ENCODE measurements at regions of chr2 and their contacts with region 1.

Region 1: DNA sequence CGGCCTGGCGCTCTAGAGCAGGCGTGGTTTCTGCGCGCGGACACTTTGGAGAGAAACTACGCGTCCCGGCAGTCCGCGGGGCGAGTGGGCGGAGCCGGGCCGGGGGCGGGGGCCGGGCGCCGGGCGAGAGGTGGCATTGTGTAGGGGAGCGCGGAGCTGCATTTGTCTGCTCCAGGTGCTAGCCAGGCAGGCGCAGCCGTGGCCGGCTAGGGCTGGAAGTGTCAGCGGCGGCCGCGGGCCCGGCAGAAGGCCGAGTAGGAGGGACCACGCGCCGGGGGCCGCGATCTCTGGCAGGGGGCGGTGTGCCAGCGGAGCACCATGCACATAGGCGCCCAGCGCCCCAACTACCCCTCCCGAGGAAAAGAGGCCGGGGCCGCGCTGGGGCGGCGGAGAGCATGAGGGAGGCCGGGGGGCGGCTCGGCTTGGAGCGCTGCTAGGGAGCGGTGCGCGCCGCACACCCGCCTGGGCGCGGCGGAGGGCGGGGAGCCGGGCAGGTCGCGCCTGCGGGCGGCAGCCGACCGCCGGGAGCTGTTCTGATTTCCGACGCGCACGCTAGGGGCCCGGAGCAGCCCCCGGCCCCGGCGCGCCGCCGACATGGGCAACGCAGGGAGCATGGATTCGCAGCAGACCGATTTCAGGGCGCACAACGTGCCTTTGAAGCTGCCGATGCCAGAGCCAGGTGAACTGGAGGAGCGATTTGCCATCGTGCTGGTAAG is at the start of gene FMNL2:
- DNase-seq: peak; percentile 95
- H3K4me3 ChIP-seq: peak within 1 kb of the TSS; percentile 81 to 99 (median 88)
- H3K27ac ChIP-seq: peak within 1 kb of the TSS; percentile 81 to 83 (median 82)
- H3K4me1 ChIP-seq: peaks cover 6 to 42% (median 35%) of the 10 kb centered on the region in 4 donors
- H3K27me3 ChIP-seq: no peaks in the 10 kb centered on the region
- CTCF ChIP-seq: no peak
- EP300 ChIP-seq: no peak
- POLR2A ChIP-seq: peak; percentile 55
- total RNA-seq, gene FMNL2: 23.5 to 28.0 (median 23.8) TPM

Region 2: GRCh38 chr2:151757861-151758260 is 577.3 kb before region 1 on chr2:
- intact Hi-C with region 1: no loop called
- DNase-seq: no peak
- H3K4me3 ChIP-seq: no peak overlapping the region
- H3K27ac ChIP-seq: no peak overlapping the region
- H3K4me1 ChIP-seq: peaks cover 0 to 6% (median 5%) of the 10 kb centered on the region in 4 donors
- H3K27me3 ChIP-seq: no peaks in the 10 kb centered on the region
- CTCF ChIP-seq: no peak
- EP300 ChIP-seq: no peak
- POLR2A ChIP-seq: no peak

Region 3: GRCh38 chr2:151808258-151809072 is 526.7 kb before region 1 on chr2:
- intact Hi-C with region 1: no loop called
- DNase-seq: no peak
- H3K4me3 ChIP-seq: no peak overlapping the region
- H3K27ac ChIP-seq: no peak overlapping the region
- H3K4me1 ChIP-seq: peaks cover 0 to 15% (median 11%) of the 10 kb centered on the region in 4 donors
- H3K27me3 ChIP-seq: no peaks in the 10 kb centered on the region
- CTCF ChIP-seq: peak; percentile 40 to 69 (median 48)
- EP300 ChIP-seq: no peak
- POLR2A ChIP-seq: no peak

Region 4: DNA sequence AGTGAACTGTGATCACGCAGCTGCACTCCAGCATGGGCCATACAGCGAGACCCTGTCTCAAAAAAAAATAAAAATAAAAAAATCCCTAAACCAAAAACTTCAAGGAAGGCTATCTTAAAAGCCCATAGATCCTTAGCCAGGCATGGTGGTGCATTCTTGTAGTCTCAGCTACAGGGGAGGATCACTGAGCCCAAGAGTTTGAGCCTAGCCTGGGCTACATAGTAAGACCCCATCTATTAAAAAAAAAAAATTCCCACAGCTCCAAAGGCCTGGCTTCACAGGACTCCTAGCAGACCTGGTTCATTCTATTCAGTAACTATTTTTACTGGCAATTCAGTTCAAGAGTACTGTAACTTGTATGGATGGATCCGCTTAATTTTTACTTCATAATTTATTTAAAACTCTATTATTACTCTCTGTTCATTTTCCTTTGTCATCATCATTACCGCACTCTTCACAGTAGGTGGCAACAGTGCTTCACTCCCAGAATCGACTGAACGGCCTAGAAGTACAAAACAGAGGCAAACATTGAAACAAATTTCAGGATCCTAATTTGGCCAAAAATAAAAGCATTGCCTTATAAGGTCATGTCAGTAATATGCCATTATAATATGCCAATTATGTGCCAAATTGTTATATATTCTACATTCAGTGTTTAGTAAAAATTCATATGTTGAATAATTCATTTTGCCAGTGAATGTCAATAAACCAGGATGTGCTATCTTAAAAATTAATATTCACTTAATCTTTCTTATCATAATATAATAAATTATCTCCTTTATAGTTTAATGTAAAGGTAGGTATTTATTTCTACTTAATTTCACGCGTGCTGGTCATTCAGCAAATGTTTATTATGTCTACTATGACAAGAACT is 145.3 kb before region 1 on chr2:
- intact Hi-C with region 1: loop called (anchors 10 kb)
- DNase-seq: no peak
- H3K4me3 ChIP-seq: no peak overlapping the region
- H3K27ac ChIP-seq: no peak overlapping the region
- H3K4me1 ChIP-seq: no peaks in the 10 kb centered on the region
- H3K27me3 ChIP-seq: peaks cover 0 to 3% (median 0%) of the 10 kb centered on the region in 4 donors
- CTCF ChIP-seq: peak; percentile 77 to 79 (median 78)
- EP300 ChIP-seq: no peak
- POLR2A ChIP-seq: no peak

Region 5: DNA sequence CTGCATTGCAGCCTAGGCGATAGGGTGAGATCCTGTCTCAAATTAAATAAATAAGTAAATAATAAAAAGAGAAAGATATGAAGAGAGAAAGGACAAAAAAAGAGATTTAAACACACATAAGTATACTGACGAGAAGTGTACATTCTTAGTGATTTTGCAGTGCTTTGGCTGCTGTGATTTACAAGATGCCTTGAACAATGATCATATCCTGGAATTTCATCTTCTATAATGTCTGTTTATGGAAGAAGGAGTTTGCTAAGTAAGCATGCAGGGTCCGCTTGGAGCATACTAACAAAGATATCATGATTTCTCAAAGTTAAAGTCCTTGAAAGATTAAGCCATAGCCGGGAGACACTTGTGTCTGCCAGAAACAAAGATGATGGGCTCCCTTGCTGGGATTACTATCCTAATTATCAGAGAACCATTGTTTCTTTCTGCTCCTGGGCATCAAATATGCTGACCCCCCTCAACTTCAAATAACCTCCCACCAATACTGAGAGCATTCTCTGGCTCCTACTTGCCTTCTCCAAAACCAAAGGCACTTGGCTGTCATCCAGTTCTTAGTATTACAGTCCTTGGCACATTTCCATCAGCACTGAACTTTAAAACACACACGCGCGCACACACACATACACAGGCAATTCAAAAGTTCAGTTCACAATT is 112.1 kb before region 1 on chr2:
- intact Hi-C with region 1: loop called (anchors 10 kb)
- DNase-seq: no peak
- H3K4me3 ChIP-seq: no peak overlapping the region
- H3K27ac ChIP-seq: peak overlapping the region in 1 of 4 donors; percentile 30
- H3K4me1 ChIP-seq: peaks cover 11 to 35% (median 28%) of the 10 kb centered on the region in 4 donors
- H3K27me3 ChIP-seq: no peaks in the 10 kb centered on the region
- CTCF ChIP-seq: no peak
- EP300 ChIP-seq: no peak
- POLR2A ChIP-seq: no peak

Region 6: DNA sequence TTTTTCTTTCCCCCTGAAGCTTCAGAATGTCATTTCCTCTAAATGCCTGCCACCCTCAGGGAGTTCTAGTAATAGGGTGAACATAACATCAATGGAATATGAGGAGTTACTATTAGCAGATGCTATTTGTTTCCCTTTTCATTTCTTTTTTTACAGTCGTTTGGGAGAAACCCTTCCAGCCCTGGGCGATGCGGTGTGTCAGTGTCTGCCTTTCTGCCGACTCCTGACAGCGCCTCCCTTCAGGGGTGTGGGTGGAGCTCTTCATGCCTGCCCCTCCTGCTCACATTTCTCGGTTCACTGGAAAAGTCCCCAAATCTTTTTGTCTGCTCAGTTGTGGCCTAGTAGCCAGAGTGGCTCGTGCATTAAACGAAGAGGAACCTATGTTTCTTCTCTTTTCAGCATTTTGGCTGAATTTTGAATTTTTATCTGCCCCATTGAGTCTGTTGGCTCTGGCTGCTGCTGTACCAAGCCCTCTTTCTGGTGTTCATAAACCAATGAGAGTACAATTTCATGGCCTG is 72.1 kb after region 1 on chr2:
- intact Hi-C with region 1: loop called (anchors 5 kb)
- DNase-seq: peak; percentile 90
- H3K4me3 ChIP-seq: peak overlapping the region; percentile 11 to 25 (median 19)
- H3K27ac ChIP-seq: peak overlapping the region; percentile 3 to 35 (median 11)
- H3K4me1 ChIP-seq: peaks cover 45 to 77% (median 58%) of the 10 kb centered on the region in 4 donors
- H3K27me3 ChIP-seq: no peaks in the 10 kb centered on the region
- CTCF ChIP-seq: no peak
- EP300 ChIP-seq: no peak
- POLR2A ChIP-seq: no peak

Region 7: GRCh38 chr2:152635635-152636298 is 300.6 kb after region 1 on chr2:
- intact Hi-C with region 1: loop called (anchors 5 kb)
- DNase-seq: no peak
- H3K4me3 ChIP-seq: no peak overlapping the region
- H3K27ac ChIP-seq: no peak overlapping the region
- H3K4me1 ChIP-seq: peaks cover 0 to 6% (median 3%) of the 10 kb centered on the region in 4 donors
- H3K27me3 ChIP-seq: no peaks in the 10 kb centered on the region
- CTCF ChIP-seq: peak; percentile 77 to 85 (median 78)
- EP300 ChIP-seq: no peak
- POLR2A ChIP-seq: no peak